Breast epithelium (tissue), 4 donors: ENCODE measurements at regions of chr2 and their contacts with region 1.

Region 1: GRCh38 chr2:67221266-67221665 is 175.9 kb upstream of the ETAA1 start:
- DNase-seq: no peak
- H3K4me3 ChIP-seq: no peak overlapping the region
- H3K27ac ChIP-seq: no peak overlapping the region
- H3K4me1 ChIP-seq: no peaks in the 10 kb centered on the region
- H3K27me3 ChIP-seq: no peaks in the 10 kb centered on the region
- CTCF ChIP-seq: no peak
- POLR2A ChIP-seq: no peak

Region 2: DNA sequence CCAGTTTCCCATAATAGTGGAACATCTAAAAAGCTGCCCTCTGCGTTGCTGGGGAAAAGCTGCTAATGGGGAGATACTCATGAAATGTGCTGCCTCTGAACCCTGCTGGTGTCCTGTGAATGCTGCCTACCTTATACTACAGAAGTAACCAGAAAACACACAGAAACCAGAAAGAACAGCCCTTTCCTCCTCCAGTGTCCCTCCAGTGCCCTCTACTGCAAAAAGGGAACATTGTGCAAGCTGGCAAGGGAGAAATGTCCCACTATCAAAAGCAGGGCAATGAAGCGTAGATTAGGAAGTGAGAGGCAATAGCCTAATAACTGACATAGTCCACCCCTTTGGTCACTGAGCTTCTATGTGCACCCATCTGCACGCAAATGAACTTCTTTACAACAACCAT is 13.2 kb after region 1 on chr2:
- intact Hi-C with region 1: no loop called
- DNase-seq: no peak
- H3K4me3 ChIP-seq: no peak overlapping the region
- H3K27ac ChIP-seq: no peak overlapping the region
- H3K4me1 ChIP-seq: no peaks in the 10 kb centered on the region
- H3K27me3 ChIP-seq: no peaks in the 10 kb centered on the region
- CTCF ChIP-seq: no peak
- POLR2A ChIP-seq: no peak

Region 3: GRCh38 chr2:67246791-67247190 is 25.5 kb after region 1 on chr2:
- intact Hi-C with region 1: loop called (anchors 2 kb)
- DNase-seq: no peak
- H3K4me3 ChIP-seq: no peak overlapping the region
- H3K27ac ChIP-seq: no peak overlapping the region
- H3K4me1 ChIP-seq: no peaks in the 10 kb centered on the region
- H3K27me3 ChIP-seq: no peaks in the 10 kb centered on the region
- CTCF ChIP-seq: no peak
- POLR2A ChIP-seq: no peak